Activated CD4-positive, alpha-beta memory T cell treated with anti-CD3 and anti-CD28 coated beads for 36 hours (primary cell): ENCODE measurements at regions of chr20 and their contacts with region 1.

Region 1: GRCh38 chr20:56554869-56555268 is 21.8 kb downstream of the FAM209B start:
- DNase-seq: peak; percentile 23
- H3K4me3 Mint-ChIP-seq: no peak overlapping the region
- H3K27ac Mint-ChIP-seq: no peak overlapping the region
- H3K4me1 Mint-ChIP-seq: peaks cover 7% of the 10 kb centered on the region
- H3K27me3 Mint-ChIP-seq: no peaks in the 10 kb centered on the region

Region 2: DNA sequence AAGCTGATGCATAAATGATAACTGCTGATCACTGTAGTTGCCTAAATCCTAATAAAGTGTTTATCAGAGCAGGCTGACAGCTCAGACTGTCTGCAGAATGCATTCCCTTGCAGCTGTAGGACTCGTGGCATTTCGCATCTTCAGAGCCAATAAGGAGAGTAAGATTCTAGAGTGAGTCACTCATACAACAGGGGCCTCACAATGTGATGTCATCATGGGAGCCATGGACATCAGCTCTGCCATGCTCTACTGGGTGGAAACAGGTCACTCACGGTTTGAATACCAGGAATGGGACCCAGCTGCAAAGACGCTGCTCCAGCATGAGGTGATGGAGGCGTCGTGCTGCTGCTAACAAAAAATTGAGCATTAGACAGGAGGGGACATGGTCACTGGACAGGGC is 14.4 kb before region 1 on chr20:
- CTCF ChIA-PET with region 1: interaction called, 26 read pairs
- POLR2A ChIA-PET with region 1: no interaction called
- intact Hi-C with region 1: no loop called
- DNase-seq: no peak
- H3K4me3 Mint-ChIP-seq: no peak overlapping the region
- H3K27ac Mint-ChIP-seq: no peak overlapping the region
- H3K4me1 Mint-ChIP-seq: no peaks in the 10 kb centered on the region
- H3K27me3 Mint-ChIP-seq: no peaks in the 10 kb centered on the region

Region 3: GRCh38 chr20:56579287-56579710 is 24.4 kb after region 1 on chr20:
- CTCF ChIA-PET with region 1: interaction called, 32 read pairs
- POLR2A ChIA-PET with region 1: no interaction called
- intact Hi-C with region 1: no loop called
- DNase-seq: no peak
- H3K4me3 Mint-ChIP-seq: no peak overlapping the region
- H3K27ac Mint-ChIP-seq: no peak overlapping the region
- H3K4me1 Mint-ChIP-seq: no peaks in the 10 kb centered on the region
- H3K27me3 Mint-ChIP-seq: peaks cover 14% of the 10 kb centered on the region

Region 4: DNA sequence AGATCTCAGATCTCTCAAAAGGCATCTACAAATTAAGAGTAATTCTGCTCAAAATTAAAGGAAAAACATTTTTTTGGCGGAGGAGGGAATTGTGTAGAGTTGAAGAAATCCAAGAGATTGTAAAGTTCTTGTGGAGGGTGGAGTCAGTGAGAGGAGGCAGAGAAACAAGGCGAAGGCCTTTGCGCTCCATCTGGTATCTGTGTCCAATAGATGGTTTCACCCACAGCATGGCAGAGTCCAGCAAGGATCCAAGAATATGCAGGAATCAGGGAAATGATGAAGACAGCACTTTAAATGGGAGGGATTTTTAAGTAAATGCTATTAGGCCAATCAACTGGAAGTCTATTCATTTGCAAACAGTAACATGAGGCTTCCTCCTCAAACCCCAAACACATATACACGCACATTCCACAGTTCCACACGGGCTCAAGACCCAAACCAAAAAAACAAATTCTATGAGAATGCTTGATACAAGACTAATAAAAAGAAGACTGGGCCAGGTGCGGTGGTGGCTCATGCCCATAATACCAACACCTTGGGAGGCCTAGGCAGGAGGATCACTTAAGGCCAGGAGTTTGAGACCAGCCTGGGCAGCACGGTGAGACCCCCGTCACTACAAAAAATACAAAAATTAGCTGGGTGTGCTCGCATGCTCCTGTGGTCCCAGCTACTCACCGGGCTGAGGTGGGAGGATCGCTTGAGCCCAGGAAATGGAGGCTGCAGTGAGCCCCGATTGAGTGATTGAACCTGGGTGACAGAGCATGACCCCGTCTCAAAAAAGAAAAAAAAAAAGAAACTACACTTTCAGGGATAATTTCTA is 52.2 kb after region 1 on chr20:
- CTCF ChIA-PET with region 1: no interaction called
- POLR2A ChIA-PET with region 1: no interaction called
- intact Hi-C with region 1: no loop called
- DNase-seq: no peak
- H3K4me3 Mint-ChIP-seq: no peak overlapping the region
- H3K27ac Mint-ChIP-seq: no peak overlapping the region
- H3K4me1 Mint-ChIP-seq: no peaks in the 10 kb centered on the region
- H3K27me3 Mint-ChIP-seq: peaks cover 1% of the 10 kb centered on the region

Region 5: GRCh38 chr20:56995576-56996075 is 440.8 kb after region 1 on chr20:
- CTCF ChIA-PET with region 1: interaction called, 21 read pairs
- POLR2A ChIA-PET with region 1: no interaction called
- intact Hi-C with region 1: no loop called
- DNase-seq: peak; percentile 22
- H3K4me3 Mint-ChIP-seq: no peak overlapping the region
- H3K27ac Mint-ChIP-seq: no peak overlapping the region
- H3K4me1 Mint-ChIP-seq: no peaks in the 10 kb centered on the region
- H3K27me3 Mint-ChIP-seq: no peaks in the 10 kb centered on the region

Region 6: DNA sequence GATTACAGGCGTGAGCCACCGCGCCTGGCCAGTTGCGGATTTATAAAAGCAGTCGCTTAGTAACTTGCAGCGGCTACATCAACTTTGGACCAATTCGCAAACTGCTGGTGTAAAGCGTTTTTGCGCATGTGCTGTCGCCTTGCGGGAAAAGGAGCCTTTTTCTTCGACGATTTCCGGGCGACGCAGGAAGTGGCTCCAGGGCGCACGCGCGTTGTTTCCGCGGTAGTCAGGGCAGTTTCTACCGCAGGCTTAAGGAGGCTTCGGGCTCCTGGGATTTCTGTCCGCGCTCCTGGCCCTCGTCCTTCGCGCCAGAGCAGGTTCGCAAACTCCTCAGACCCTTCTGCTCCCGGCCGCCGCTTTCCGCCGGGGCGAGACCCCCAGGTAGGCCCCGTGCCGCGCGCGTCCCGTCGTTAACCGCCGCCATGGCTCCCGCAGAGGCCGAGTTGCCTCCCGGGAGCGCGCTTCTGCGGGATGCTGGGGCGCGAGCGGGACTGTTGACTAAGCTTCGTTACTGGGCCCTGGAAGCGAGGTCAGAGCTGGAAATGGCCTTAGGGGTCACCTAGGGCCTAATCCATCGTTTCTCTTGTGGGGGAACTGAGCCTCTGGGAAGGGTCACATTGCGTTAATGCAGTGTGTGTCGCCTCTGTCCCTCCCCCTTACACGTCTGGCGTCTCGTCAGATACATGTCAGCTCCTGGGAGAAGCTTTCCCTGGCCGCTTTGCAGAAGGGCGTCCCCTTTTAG is 796.3 kb after region 1 on chr20 and contains the start of gene RAE1:
- CTCF ChIA-PET with region 1: interaction called, 39 read pairs
- POLR2A ChIA-PET with region 1: no interaction called
- intact Hi-C with region 1: loop called (anchors 5 kb)
- DNase-seq: peak; percentile 95
- H3K4me3 Mint-ChIP-seq: peak within 1 kb of the TSS; percentile 90
- H3K27ac Mint-ChIP-seq: peak within 1 kb of the TSS; percentile 85
- H3K4me1 Mint-ChIP-seq: peaks cover 23% of the 10 kb centered on the region
- H3K27me3 Mint-ChIP-seq: no peaks in the 10 kb centered on the region
- total RNA-seq, gene RAE1: 33.7 to 38.2 TPM